ENCODE measurements at regions of chr1 and their contacts with region 1.

Region 1: GRCh38 chr1:39183503-39184353 is 20.8 kb upstream of the MACF1 start:
- DNase-seq: peak in 1 of 2 donors; percentile 27
- ATAC-seq: peak; percentile 35 to 86 (median 74)
- H3K4me3 ChIP-seq: no peak overlapping the region
- H3K27ac ChIP-seq: peak overlapping the region in 4 of 10 donors; percentile 8 to 49 (median 36)
- H3K4me1 ChIP-seq: peaks cover 2 to 45% (median 30%) of the 10 kb centered on the region in 9 donors
- H3K27me3 ChIP-seq: no peaks in the 10 kb centered on the region
- CTCF ChIP-seq: peak in 8 of 9 donors; percentile 7 to 54 (median 47)

Region 2: DNA sequence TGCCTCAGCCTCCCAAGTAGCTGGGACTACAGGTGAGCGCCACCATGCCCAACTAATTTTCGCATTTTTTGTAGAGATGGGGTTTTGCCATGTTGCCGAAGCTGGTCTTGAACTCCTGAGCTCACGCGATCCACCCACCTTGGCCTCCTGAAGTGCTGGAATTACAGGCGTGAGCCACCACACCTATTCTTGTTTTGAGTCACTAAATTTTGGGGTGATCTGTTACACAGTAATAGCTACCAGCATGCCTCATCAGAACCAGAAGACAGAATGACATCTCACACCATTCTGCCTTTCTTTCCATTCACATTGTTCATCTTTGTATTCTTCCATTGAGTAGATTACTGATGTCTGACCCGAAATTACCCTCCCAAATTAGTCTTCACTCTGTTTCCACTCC is 251.2 kb before region 1 on chr1:
- intact Hi-C with region 1: no loop called
- DNase-seq: no peak
- ATAC-seq: no peak
- H3K4me3 ChIP-seq: no peak overlapping the region
- H3K27ac ChIP-seq: no peak overlapping the region
- H3K4me1 ChIP-seq: no peaks in the 10 kb centered on the region
- H3K27me3 ChIP-seq: no peaks in the 10 kb centered on the region
- CTCF ChIP-seq: no peak

Region 3: GRCh38 chr1:38944547-38944946 is 239.2 kb before region 1 on chr1:
- intact Hi-C with region 1: no loop called
- DNase-seq: no peak
- ATAC-seq: no peak
- H3K4me3 ChIP-seq: no peak overlapping the region
- H3K27ac ChIP-seq: no peak overlapping the region
- H3K4me1 ChIP-seq: peaks cover 0 to 16% (median 9%) of the 10 kb centered on the region in 9 donors
- H3K27me3 ChIP-seq: no peaks in the 10 kb centered on the region
- CTCF ChIP-seq: no peak

Region 4: GRCh38 chr1:39132505-39133339 is 51.0 kb before region 1 on chr1:
- intact Hi-C with region 1: loop called in 2 of 10 experiments (anchors 5 to 10 kb)
- DNase-seq: peak; percentile 74 to 88
- ATAC-seq: peak; percentile 76 to 95 (median 91)
- H3K4me3 ChIP-seq: peak overlapping the region in 2 of 10 donors; percentile 6 to 9
- H3K27ac ChIP-seq: peak overlapping the region in 9 of 10 donors; percentile 69 to 84 (median 75)
- H3K4me1 ChIP-seq: peaks cover 5 to 76% (median 61%) of the 10 kb centered on the region in 9 donors
- H3K27me3 ChIP-seq: no peaks in the 10 kb centered on the region
- CTCF ChIP-seq: peak in 8 of 9 donors; percentile 26 to 69 (median 48)

Region 5: GRCh38 chr1:39142401-39143151 is 41.2 kb before region 1 on chr1:
- intact Hi-C with region 1: loop called in 2 of 10 experiments (anchors 5 to 10 kb)
- DNase-seq: no peak
- ATAC-seq: peak in 5 of 8 donors; percentile 41 to 55 (median 51)
- H3K4me3 ChIP-seq: no peak overlapping the region
- H3K27ac ChIP-seq: peak overlapping the region in 2 of 10 donors; percentile 7 to 32
- H3K4me1 ChIP-seq: peaks cover 8 to 40% (median 22%) of the 10 kb centered on the region in 9 donors
- H3K27me3 ChIP-seq: no peaks in the 10 kb centered on the region
- CTCF ChIP-seq: no peak

Measured in heart right ventricle (tissue), 16 donors.